Activated T-helper 1 cell treated with anti-CD3 and anti-CD28 coated beads, Interleukin-12 subunit alpha, Interleukin-12 subunit beta, Interleukin-2, Interleukin-4 antibody, amounts not matched to agents 30 ng/mL and 10 ng/mL and 1 ng/mL, durations not matched to agents 14 hours and 24 hours and 36 hours (primary cell): ENCODE measurements at regions of chr19 and their contacts with region 1.

Region 1: DNA sequence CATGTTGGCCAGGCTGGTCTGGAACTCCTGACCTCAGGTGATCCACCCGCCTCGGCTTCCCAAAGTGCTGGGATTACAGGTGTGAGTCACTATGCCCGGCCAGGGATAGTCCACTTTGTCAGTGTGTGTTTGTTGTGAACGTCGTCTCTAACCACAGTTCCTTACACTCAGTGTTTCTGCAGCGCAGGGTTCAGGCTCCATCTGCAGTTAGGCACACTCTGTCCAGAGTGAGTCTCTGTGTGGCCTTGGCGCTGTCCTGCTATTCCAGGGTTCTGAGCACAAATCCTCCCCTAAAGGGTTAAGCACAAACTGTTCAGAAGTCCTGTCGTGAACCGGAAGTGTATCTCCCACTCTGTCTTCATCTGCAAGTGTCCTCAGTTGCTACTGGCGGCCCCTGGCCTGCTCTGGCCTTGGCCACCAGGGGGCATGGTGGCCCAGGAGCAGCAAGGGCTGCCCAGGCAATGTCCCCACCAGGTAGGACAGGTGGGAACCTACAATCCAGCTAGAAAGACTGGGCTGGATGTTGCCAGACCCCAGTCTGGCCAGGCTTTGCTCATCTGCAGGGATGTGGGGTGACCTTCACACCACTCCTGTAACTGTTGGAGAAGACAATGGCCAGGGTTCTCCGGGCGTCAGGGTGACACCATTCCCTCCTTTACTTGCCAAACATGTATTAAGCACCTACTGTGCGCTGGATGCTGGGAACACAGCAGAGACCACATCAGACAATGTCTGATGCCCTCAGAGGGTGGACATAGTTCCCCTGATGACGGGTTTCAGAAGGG is 38.7 kb upstream of the GATAD2A start:
- DNase-seq: peak; percentile 66
- H3K4me3 Mint-ChIP-seq: peak overlapping the region; percentile 55
- H3K27ac Mint-ChIP-seq: no peak overlapping the region
- H3K4me1 Mint-ChIP-seq: peaks cover 14% of the 10 kb centered on the region
- H3K27me3 Mint-ChIP-seq: no peaks in the 10 kb centered on the region

Region 2: GRCh38 chr19:19385108-19385899 is 18.5 kb after region 1 on chr19:
- intact Hi-C with region 1: loop called (anchors 1 kb)
- DNase-seq: peak; percentile 100
- H3K4me3 Mint-ChIP-seq: peak overlapping the region; percentile 87
- H3K27ac Mint-ChIP-seq: peak overlapping the region; percentile 92
- H3K4me1 Mint-ChIP-seq: peaks cover 45% of the 10 kb centered on the region
- H3K27me3 Mint-ChIP-seq: peaks cover 2% of the 10 kb centered on the region

Region 3: GRCh38 chr19:19399733-19400433 is 33.1 kb after region 1 on chr19:
- intact Hi-C with region 1: no loop called
- DNase-seq: no peak
- H3K4me3 Mint-ChIP-seq: no peak overlapping the region
- H3K27ac Mint-ChIP-seq: no peak overlapping the region
- H3K4me1 Mint-ChIP-seq: peaks cover 27% of the 10 kb centered on the region
- H3K27me3 Mint-ChIP-seq: no peaks in the 10 kb centered on the region

Region 4: GRCh38 chr19:19444681-19445155 is 77.9 kb after region 1 on chr19:
- intact Hi-C with region 1: loop called (anchors 2 kb)
- DNase-seq: no peak
- H3K4me3 Mint-ChIP-seq: peak overlapping the region; percentile 28
- H3K27ac Mint-ChIP-seq: peak overlapping the region; percentile 73
- H3K4me1 Mint-ChIP-seq: peaks cover 60% of the 10 kb centered on the region
- H3K27me3 Mint-ChIP-seq: no peaks in the 10 kb centered on the region